ENCODE measurements at regions of chr20 and their contacts with region 1.

Region 1: DNA sequence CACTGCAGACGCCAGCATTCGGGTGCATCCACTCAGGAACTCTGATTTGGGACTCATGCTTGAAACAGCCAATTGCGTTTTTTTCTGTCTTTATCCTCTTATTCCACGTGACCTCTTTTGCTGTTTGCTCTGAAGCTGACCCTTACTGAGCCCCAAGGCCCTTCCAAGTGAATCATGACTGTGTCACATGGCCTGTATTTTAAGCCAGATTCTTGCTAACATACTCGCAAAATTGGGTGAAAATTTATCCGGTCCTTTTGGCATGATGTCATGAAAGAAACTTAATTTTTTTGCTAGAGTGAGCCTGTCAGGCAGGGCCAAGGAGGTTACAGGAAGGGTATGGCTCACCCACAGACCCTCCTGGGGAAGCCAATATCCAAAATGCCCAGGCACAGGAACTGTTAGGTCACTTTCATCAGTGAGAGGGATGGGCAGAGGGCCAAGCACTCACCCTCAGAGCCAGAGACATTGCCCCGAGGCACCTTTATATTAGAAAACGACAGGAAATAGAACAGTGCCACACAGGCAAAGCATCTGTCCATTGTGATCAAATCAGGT is 296.7 kb downstream of the CDH26 start:
- DNase-seq: no peak
- H3K4me3 ChIP-seq: no peak overlapping the region
- H3K27ac ChIP-seq: no peak overlapping the region
- H3K4me1 ChIP-seq: peaks cover 0 to 6% (median 0%) of the 10 kb centered on the region in 4 donors
- H3K27me3 ChIP-seq: no peaks in the 10 kb centered on the region
- CTCF ChIP-seq: no peak

Region 2: GRCh38 chr20:59994697-59995122 is 260.2 kb before region 1 on chr20:
- intact Hi-C with region 1: no loop called
- DNase-seq: no peak
- H3K4me3 ChIP-seq: no peak overlapping the region
- H3K27ac ChIP-seq: no peak overlapping the region
- H3K4me1 ChIP-seq: no peaks in the 10 kb centered on the region
- H3K27me3 ChIP-seq: no peaks in the 10 kb centered on the region
- CTCF ChIP-seq: no peak

Region 3: DNA sequence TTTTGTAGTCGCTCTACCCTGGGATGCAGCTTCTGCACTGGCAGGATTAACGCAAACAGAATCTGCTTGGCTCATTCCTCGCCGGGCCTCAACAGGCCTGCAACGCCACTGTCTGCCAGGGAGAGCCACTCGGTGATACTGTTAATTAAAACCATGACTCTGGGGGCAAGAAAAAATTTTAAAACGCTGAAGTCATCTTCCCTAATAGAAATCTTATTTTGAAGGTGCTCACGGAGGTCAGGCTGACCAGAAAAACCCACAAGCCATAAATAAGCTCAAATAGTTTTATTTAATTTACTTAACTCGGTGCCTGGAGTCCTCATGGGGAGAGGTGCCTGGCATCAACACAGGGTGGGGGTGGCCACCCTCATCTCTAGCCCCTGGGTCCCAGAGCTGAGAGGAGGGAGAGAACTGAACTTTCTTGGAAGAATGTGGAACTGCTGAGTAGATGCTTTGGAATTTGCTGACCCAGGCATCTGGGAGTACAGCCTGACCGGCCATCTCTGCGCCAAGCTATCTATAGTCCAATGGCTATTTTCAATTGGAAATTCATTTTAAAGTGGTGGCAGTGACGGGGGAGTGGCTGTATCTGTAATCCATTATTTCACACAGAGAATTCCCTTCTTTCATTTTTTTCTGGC is 192.0 kb before region 1 on chr20:
- intact Hi-C with region 1: loop called (anchors 10 kb)
- DNase-seq: no peak
- H3K4me3 ChIP-seq: peak overlapping the region; percentile 23 to 30
- H3K27ac ChIP-seq: peak overlapping the region; percentile 14 to 58
- H3K4me1 ChIP-seq: peaks cover 0 to 27% (median 24%) of the 10 kb centered on the region in 4 donors
- H3K27me3 ChIP-seq: no peaks in the 10 kb centered on the region
- CTCF ChIP-seq: no peak

Measured in tibial artery (tissue), 4 donors.